PC-3 (cell line): ENCODE measurements at regions of chr11 and their contacts with region 1.

Region 1: GRCh38 chr11:28697920-28698827 is 590.0 kb downstream of the METTL15 start:
- DNase-seq: peak; percentile 76
- ATAC-seq: no peak
- H3K4me3 ChIP-seq: no peak overlapping the region
- H3K27ac ChIP-seq: no peak overlapping the region
- H3K4me1 ChIP-seq: peaks cover 24% of the 10 kb centered on the region
- H3K27me3 ChIP-seq: no peaks in the 10 kb centered on the region
- CTCF ChIP-seq: peak; percentile 90

Region 2: DNA sequence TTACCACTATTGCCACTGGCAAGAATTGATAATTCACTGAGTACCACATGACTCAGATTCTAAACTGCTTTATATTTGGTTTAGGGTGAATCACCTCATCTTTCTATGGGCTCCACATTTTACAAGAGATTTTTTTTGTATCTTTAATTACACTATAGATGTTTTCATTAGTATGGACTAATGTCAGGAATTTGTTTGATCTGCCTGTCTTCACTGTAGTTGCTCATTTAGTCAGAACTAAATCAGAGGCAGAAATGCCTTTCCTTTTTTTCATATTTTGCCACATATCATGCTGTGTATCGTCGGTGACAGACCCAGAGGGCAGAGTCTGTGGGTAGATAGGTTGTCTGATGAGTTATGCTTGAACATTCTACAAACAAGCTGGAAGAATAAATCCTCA is 65.8 kb before region 1 on chr11:
- CTCF ChIA-PET with region 1: no interaction called
- POLR2A ChIA-PET with region 1: no interaction called
- intact Hi-C with region 1: loop called (anchors 2 kb)
- DNase-seq: peak; percentile 89
- ATAC-seq: peak; percentile 82
- H3K4me3 ChIP-seq: no peak overlapping the region; the same call in 1 of the 2 replicates
- H3K27ac ChIP-seq: peak overlapping the region; percentile 79
- H3K4me1 ChIP-seq: peaks cover 42% of the 10 kb centered on the region
- H3K27me3 ChIP-seq: no peaks in the 10 kb centered on the region
- CTCF ChIP-seq: no peak

Region 3: GRCh38 chr11:28756977-28757376 is 58.8 kb after region 1 on chr11:
- CTCF ChIA-PET with region 1: interaction called, 3 read pairs
- POLR2A ChIA-PET with region 1: no interaction called
- intact Hi-C with region 1: loop called (anchors 1 kb)
- DNase-seq: peak; percentile 89
- ATAC-seq: peak; percentile 59
- H3K4me3 ChIP-seq: peak overlapping the region; percentile 16; the same call in 1 of the 2 replicates
- H3K27ac ChIP-seq: peak overlapping the region; percentile 79
- H3K4me1 ChIP-seq: peaks cover 66% of the 10 kb centered on the region
- H3K27me3 ChIP-seq: no peaks in the 10 kb centered on the region
- CTCF ChIP-seq: no peak

Region 4: GRCh38 chr11:28808771-28809170 is 110.6 kb after region 1 on chr11:
- CTCF ChIA-PET with region 1: no interaction called
- POLR2A ChIA-PET with region 1: no interaction called
- intact Hi-C with region 1: no loop called
- DNase-seq: no peak
- ATAC-seq: no peak
- H3K4me3 ChIP-seq: no peak overlapping the region
- H3K27ac ChIP-seq: no peak overlapping the region
- H3K4me1 ChIP-seq: no peaks in the 10 kb centered on the region
- H3K27me3 ChIP-seq: no peaks in the 10 kb centered on the region
- CTCF ChIP-seq: no peak

Region 5: DNA sequence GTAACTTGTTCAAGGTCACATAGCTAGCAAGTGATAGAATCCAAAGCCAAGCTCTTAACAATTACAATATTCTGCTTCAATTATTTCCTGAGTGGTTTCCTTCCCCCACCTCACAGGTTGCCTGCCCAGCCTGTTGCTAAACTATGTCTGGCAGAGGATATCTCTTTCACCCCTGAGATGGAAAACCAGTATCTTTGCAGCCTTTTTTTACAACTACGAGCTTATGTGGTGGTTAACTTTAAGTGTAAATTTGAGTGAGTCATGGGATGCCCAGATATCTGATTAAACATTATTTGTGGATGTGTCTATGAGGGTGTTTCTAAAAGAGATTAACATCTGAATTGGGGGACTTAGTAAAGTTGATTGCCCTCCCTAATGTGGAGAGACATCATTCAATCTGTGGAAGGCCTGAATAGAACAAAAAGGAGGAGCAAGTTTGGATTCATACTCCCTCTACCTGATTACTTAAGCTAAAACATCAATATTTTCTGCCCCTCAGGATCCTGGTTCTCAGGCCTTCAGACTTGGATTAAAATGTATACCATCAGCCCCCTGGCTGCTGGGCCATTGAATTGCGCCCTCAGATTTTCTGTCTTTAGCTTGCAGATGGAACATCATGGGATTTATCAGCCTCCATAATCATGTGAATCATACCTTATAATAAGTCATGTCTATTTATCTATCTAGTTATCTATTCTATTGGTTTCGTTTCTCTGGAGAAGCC is 321.9 kb after region 1 on chr11:
- CTCF ChIA-PET with region 1: interaction called, 5 read pairs
- POLR2A ChIA-PET with region 1: no interaction called
- intact Hi-C with region 1: loop called (anchors 1 kb)
- DNase-seq: peak; percentile 73
- ATAC-seq: peak; percentile 52
- H3K4me3 ChIP-seq: no peak overlapping the region
- H3K27ac ChIP-seq: peak overlapping the region; percentile 70
- H3K4me1 ChIP-seq: peaks cover 34% of the 10 kb centered on the region
- H3K27me3 ChIP-seq: no peaks in the 10 kb centered on the region
- CTCF ChIP-seq: peak; percentile 79

Region 6: DNA sequence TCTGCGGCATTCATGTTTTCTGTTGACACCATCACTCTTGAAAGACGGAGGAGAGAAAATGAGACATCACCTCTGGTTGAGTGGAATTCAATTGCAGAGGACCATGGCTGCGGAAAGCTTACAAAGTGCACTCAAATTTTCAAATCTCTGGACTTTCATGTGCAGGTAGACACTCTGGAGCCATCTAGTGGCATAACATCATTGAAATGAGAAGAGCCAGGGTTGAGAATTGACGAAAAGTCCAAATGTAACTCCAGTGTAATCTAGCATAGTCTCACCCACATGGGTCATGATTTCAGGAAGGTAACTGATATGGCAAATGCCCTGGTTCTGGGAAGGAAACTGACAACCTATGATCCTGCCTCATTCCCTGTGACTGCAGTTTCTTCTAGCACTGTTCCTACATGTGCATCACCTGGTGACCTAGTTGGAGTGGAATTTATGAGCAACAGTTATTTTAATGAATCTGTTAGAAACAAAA is 630.8 kb after region 1 on chr11:
- CTCF ChIA-PET with region 1: no interaction called
- POLR2A ChIA-PET with region 1: no interaction called
- intact Hi-C with region 1: loop called (anchors 5 kb)
- DNase-seq: peak; percentile 77
- ATAC-seq: peak; percentile 88
- H3K4me3 ChIP-seq: no peak overlapping the region
- H3K27ac ChIP-seq: no peak overlapping the region
- H3K4me1 ChIP-seq: peaks cover 27% of the 10 kb centered on the region
- H3K27me3 ChIP-seq: no peaks in the 10 kb centered on the region
- CTCF ChIP-seq: peak; percentile 89